Dorsolateral prefrontal cortex (tissue), 120 donors: ENCODE measurements at regions of chr3 and their contacts with region 1.

Region 1: GRCh38 chr3:184320099-184320445 is 5.7 kb downstream of the EIF4G1 start:
- DNase-seq: peak; percentile 85 to 98 (median 96)
- H3K4me3 ChIP-seq: peak overlapping the region in 37 of 59 donors; percentile 6 to 49 (median 26)
- H3K27ac ChIP-seq: peak overlapping the region in 57 of 59 donors; percentile 12 to 92 (median 83)
- H3K27me3 ChIP-seq: no peaks in the 10 kb centered on the region
- CTCF ChIP-seq: peak in 33 of 56 donors; percentile 8 to 52 (median 26)

Region 2: DNA sequence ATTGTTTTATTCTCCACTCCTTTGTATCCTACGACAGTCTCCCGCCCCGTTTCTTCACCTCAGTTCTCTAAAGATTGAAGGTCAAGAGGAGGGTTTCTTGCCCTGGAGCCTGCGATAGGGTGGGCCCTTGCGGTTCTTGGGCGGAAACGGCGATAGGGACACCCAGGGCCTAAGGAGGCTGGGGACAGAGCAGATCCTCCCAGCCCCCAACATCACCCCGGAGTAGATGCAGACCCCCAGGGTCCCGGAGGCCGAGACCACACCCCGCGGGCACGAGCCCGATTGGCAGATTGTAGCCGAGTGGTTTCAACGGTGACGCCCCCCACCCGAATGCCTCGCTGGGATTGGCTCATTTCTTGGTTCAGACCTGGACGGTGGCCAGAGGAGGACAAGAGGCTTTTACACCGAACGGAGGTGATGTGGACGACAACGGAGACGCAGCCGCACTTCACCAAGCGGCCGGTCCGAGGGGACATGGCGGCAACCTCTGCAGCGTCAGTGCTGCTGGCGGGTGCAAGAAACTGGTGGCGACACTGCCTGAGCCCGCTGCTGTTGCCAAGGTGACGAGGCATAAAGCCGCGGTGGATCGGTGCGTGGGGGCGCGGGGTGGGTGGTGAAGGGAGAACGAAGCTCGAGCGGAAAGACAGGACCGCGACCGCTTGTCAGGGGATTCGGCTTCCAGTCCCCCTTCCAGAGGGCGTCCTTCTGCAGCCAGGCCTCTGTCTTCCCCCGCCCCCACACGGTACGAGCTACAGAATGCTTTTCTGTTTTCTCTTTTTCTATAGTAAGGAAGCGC is 872.7 kb before region 1 on chr3:
- intact Hi-C with region 1: no loop called
- DNase-seq: peak; percentile 69 to 93 (median 88)
- H3K4me3 ChIP-seq: peak overlapping the region; percentile 48 to 93 (median 80)
- H3K27ac ChIP-seq: peak overlapping the region; percentile 57 to 97 (median 90)
- H3K27me3 ChIP-seq: no peaks in the 10 kb centered on the region
- CTCF ChIP-seq: peak in 35 of 56 donors; percentile 7 to 56 (median 30)

Region 3: GRCh38 chr3:184209146-184209923 is 110.7 kb before region 1 on chr3:
- intact Hi-C with region 1: no loop called
- DNase-seq: no peak
- H3K4me3 ChIP-seq: no peak overlapping the region
- H3K27ac ChIP-seq: no peak overlapping the region
- H3K27me3 ChIP-seq: peaks cover 0 to 3% (median 0%) of the 10 kb centered on the region in 45 donors
- CTCF ChIP-seq: no peak

Region 4: DNA sequence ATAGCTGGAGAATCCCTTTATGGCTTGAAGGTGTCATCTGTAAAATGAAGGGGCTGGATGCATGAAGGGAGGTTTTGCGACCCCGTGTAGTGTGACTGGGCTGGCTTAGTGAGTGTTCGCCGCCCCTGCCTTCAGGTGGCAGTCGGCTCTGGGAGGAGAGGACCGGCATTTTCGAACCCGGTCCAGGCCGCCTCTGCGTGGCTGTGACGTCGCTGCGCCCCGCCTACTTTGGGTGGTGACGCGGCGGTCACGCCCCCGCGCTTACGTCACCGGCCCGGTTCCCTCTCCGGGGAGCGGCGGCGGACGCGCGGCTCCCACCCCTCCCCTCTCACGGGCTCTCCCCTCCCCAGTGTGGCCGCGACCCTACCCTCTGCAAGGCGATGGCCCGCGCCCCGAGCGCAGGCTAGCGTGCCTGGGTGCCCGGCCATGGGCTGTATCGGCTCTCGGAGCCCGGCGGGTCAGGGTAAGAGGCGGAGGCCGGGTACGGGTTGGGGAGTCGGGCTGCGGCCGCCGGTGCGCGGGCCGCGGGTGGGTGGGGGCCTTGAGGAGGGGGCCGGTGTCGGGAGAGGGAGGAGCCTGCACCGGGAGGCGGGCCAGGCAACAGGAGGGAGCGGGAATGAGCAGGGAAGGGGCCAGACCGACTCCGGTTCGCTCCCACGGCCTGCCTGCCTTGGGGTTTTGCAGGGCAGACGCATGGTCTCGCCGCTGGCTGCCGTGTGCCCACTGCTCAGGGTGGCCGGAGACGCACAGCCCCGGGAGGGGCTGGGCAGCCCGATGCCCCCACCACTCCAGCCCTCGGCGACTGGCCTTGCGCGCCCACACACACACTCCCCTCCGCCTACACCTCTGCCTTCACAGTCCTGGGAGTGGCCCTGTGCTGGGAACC is 15.8 kb after region 1 on chr3:
- intact Hi-C with region 1: loop called (anchors 2 kb)
- DNase-seq: peak; percentile 86 to 95 (median 92)
- H3K4me3 ChIP-seq: peak overlapping the region; percentile 50 to 93 (median 84)
- H3K27ac ChIP-seq: peak overlapping the region; percentile 75 to 98 (median 95)
- H3K27me3 ChIP-seq: no peaks in the 10 kb centered on the region
- CTCF ChIP-seq: peak in 5 of 56 donors; percentile 7 to 32 (median 11)

Region 5: GRCh38 chr3:184811999-184812661 is 492.1 kb after region 1 on chr3 and contains the start of gene VPS8:
- intact Hi-C with region 1: loop called in 1 of 2 experiments (anchors 5 kb)
- DNase-seq: peak; percentile 92 to 97 (median 94)
- H3K4me3 ChIP-seq: peak within 1 kb of the TSS; percentile 68 to 100 (median 94)
- H3K27ac ChIP-seq: peak within 1 kb of the TSS in 51 of 59 donors; percentile 10 to 92 (median 72)
- H3K27me3 ChIP-seq: no peaks in the 10 kb centered on the region
- CTCF ChIP-seq: peak; percentile 72 to 96 (median 86)
- total RNA-seq, gene VPS8: 78.0 to 146 (median 110) TPM